SK-N-SH (cell line): ENCODE measurements at regions of chr15 and their contacts with region 1.

Region 1: DNA sequence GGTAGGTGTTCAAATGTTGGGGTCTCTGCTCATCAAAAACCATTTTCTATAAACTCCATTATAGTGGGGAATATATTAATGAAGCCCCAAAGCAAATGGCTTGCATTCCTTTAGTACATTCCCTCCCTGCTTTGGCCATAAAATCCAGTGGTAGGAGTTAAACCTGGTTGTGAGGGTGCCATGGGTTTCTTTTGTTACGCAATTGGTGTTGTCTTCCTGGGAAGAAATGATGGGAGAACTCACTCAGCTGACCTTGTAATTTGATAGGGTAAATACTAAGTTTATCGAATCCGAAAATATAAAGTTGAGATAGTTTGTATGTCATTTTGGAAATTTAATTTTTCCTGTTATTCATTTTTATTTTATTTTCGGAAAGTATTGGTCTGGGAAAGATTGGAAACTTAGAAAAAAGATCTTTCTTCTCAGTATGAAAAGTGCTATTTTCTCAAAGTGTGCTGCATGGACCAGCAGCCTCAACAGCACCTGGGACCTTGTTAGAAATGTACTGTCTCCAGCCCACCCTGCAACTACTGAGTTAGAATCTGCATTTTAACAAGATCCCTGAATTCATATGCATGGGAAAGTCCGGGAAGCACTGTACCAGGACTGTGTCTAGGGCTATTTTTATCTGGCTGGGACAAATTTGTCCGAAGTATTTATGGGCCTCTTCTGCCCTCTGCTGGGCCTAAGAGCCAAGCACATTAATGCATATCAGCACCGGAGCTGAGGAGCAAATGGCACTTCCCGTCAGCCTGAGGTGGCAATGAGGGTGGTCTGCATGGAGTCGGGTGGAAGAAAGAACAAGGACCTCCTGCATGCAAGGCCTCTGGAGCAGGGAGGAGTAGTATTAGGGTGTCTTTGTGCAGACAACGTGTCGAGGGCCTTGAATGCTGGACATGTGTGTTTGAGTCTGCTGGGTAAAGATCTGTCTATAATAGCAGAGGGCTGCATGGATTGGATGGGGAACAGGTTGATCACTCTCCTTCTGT is 54.7 kb downstream of the FAM81A start:
- DNase-seq: peak; percentile 70
- H3K4me3 ChIP-seq: no peak overlapping the region
- H3K27ac ChIP-seq: no peak overlapping the region
- H3K4me1 ChIP-seq: peaks cover 0 to 2% of the 10 kb centered on the region in 2 experiments; a peak in 1 of 4 replicates
- H3K27me3 ChIP-seq: no peaks in the 10 kb centered on the region
- CTCF ChIP-seq: peak; percentile 85
- EP300 ChIP-seq: no peak
- RAD21 ChIP-seq: peak; percentile 99

Region 2: DNA sequence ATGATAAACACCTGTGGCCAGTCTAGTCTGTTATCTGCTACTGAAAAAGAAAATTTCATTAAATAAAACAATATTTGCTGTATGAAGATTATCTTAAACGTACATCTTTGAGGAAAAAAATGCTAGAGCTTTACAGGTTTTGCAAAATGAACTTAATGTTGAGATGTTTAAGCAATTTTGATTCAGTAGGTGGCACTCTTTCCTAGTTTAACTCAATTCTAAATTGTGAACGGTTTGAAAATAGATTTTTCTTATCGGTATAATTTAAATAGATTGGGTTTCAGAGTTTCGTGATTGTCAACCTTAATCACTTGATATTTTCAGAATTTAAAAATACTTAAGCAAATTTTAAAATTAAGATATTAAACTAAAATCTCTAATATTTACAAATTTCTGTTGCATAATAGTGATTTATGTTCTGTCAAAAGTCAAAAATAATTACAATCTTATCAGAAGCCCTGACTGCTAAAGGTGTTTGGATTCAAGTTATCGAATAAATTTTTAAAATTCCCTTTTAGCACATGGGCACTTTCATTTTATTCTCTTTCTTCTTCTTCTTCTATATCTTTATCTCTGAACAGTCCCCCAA is 512.2 kb before region 1 on chr15:
- CTCF ChIA-PET with region 1: interaction called, 21 read pairs
- POLR2A ChIA-PET with region 1: interaction called, 3 read pairs
- DNase-seq: peak; percentile 34
- H3K4me3 ChIP-seq: no peak overlapping the region
- H3K27ac ChIP-seq: no peak overlapping the region
- H3K4me1 ChIP-seq: no peaks in the 10 kb centered on the region
- H3K27me3 ChIP-seq: no peaks in the 10 kb centered on the region
- CTCF ChIP-seq: peak; percentile 70
- EP300 ChIP-seq: no peak
- RAD21 ChIP-seq: peak; percentile 78

Region 3: GRCh38 chr15:58987489-58988005 is 505.1 kb before region 1 on chr15 and contains the start of gene RNF111:
- CTCF ChIA-PET with region 1: interaction called, 21 read pairs
- POLR2A ChIA-PET with region 1: no interaction called
- DNase-seq: peak; percentile 92
- H3K4me3 ChIP-seq: peak within 1 kb of the TSS; percentile 85 to 88
- H3K27ac ChIP-seq: peak within 1 kb of the TSS; percentile 80 to 92
- H3K4me1 ChIP-seq: peaks cover 0 to 3% of the 10 kb centered on the region in 2 experiments; a peak in 1 of 4 replicates
- H3K27me3 ChIP-seq: no peaks in the 10 kb centered on the region
- CTCF ChIP-seq: no peak
- EP300 ChIP-seq: peak in 1 of 2 experiments; percentile 49; a peak in 1 of 4 replicates
- RAD21 ChIP-seq: no peak
- polyA plus RNA-seq, gene RNF111: 16.5 and 19.8 TPM in 2 replicates

Region 4: DNA sequence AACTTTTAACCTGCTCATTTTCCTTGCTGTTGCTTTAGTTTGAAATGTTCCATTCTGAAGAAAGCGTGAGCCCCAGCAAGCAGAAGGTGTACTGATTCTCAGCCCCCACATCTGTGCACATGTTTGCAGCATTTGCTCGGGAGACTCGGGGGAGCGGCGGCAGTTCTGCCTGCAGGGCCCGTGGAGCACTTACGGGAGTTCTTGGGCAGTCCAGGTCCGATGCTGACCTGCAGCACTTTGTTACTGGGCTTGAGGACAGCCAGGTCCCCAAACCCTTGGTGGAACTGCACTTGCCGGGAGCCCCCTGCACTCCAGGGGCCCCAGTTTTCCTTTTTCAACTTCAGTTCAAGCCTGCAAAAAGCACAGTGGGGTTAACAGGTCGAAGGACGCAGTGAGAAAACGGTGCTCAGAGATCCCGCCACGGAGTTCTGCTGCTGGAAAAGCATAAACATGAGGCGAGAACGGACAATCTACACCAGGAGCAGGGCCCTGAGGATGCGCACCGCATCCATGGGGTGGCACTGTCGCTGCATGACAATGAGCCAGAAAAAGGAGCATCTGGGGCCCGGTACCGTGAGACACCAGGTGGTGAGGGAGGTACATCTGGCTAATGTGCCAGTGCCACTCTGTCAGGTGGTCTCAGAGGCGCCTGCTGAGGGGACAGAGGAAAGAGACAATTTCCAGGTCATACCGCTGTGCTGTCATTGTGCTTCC is 331.6 kb before region 1 on chr15:
- CTCF ChIA-PET with region 1: interaction called, 52 read pairs
- POLR2A ChIA-PET with region 1: no interaction called
- DNase-seq: peak; percentile 72
- H3K4me3 ChIP-seq: no peak overlapping the region
- H3K27ac ChIP-seq: no peak overlapping the region
- H3K4me1 ChIP-seq: no peaks in the 10 kb centered on the region; a peak in 1 of 4 replicates
- H3K27me3 ChIP-seq: no peaks in the 10 kb centered on the region
- CTCF ChIP-seq: peak; percentile 65
- EP300 ChIP-seq: no peak
- RAD21 ChIP-seq: peak; percentile 82

Region 5: DNA sequence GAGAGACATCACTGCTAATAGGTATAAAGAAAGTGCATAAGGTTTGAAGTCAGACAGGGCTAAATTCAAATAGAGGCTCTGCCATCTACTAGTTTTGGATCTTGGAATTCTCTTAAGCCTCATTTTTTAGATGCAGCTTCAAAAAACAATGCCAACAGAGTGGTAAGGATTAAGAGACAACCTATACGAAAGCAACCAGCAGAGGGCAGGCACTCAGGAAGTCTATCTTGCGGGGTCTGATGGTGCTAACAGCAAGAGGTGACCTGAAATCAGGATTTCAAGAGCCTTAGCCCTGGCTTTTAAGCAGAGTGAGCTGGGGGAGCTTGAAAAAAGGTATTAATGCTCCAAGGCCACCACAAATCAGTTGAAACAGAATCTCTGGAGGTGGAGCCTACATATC is 245.3 kb before region 1 on chr15:
- CTCF ChIA-PET with region 1: interaction called, 14 read pairs
- POLR2A ChIA-PET with region 1: no interaction called
- DNase-seq: peak; percentile 41
- H3K4me3 ChIP-seq: no peak overlapping the region; a peak in 1 of 4 replicates
- H3K27ac ChIP-seq: no peak overlapping the region
- H3K4me1 ChIP-seq: no peaks in the 10 kb centered on the region
- H3K27me3 ChIP-seq: no peaks in the 10 kb centered on the region
- CTCF ChIP-seq: peak; percentile 79
- EP300 ChIP-seq: no peak
- RAD21 ChIP-seq: peak; percentile 66

Region 6: DNA sequence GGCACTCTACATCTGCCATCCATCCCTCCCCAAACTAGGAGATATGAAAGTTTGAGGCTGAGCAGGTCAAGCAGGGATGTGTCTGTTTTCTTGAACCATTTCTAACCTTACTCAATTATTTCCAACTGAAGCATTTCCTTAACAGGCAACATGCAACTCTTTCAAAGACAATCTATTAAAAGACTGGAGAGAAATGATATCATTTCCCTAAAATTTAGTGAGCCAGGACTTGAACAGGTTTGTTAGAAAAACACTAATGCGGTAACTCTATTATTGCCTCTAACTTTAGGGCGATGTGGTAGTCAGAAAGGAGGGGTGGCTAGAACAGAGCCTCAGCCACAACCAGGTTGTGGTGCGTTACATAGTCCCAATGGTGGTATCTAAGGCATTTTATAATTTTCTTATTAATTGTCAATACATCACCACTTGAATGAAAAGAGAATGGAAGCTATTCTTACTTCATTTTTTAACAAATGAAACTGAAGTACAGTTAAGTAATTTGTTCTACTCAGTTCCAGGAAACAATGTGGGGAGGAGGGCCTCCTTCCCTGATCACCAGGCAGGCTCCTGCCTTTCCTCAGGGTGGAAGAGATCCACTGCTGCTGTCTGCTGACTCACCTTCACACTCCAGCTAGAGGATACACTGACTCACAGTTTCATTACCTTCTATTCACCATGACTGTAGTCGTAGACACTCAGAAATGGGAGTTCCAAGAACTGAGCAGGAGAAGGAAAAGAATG is 142.8 kb before region 1 on chr15:
- CTCF ChIA-PET with region 1: no interaction called
- POLR2A ChIA-PET with region 1: no interaction called
- DNase-seq: peak; percentile 24
- H3K4me3 ChIP-seq: no peak overlapping the region
- H3K27ac ChIP-seq: peak overlapping the region; percentile 65 to 84
- H3K4me1 ChIP-seq: peaks cover 5 to 8% of the 10 kb centered on the region in 2 experiments; a peak in 3 of 4 replicates
- H3K27me3 ChIP-seq: no peaks in the 10 kb centered on the region
- CTCF ChIP-seq: no peak
- EP300 ChIP-seq: no peak
- RAD21 ChIP-seq: no peak